ENCODE measurements at regions of chr2 and their contacts with region 1.

Region 1: GRCh38 chr2:71018625-71019024 is 24.0 kb upstream of the TEX261 start:
- DNase-seq: no peak
- H3K4me3 Mint-ChIP-seq: no peak overlapping the region
- H3K27ac Mint-ChIP-seq: no peak overlapping the region
- H3K4me1 Mint-ChIP-seq: peaks cover 8% of the 10 kb centered on the region
- H3K27me3 Mint-ChIP-seq: no peaks in the 10 kb centered on the region

Region 2: GRCh38 chr2:70975091-70975636 is 43.5 kb before region 1 on chr2:
- CTCF ChIA-PET with region 1: no interaction called
- intact Hi-C with region 1: no loop called
- DNase-seq: no peak
- H3K4me3 Mint-ChIP-seq: no peak overlapping the region
- H3K27ac Mint-ChIP-seq: no peak overlapping the region
- H3K4me1 Mint-ChIP-seq: peaks cover 13% of the 10 kb centered on the region
- H3K27me3 Mint-ChIP-seq: no peaks in the 10 kb centered on the region

Region 3: DNA sequence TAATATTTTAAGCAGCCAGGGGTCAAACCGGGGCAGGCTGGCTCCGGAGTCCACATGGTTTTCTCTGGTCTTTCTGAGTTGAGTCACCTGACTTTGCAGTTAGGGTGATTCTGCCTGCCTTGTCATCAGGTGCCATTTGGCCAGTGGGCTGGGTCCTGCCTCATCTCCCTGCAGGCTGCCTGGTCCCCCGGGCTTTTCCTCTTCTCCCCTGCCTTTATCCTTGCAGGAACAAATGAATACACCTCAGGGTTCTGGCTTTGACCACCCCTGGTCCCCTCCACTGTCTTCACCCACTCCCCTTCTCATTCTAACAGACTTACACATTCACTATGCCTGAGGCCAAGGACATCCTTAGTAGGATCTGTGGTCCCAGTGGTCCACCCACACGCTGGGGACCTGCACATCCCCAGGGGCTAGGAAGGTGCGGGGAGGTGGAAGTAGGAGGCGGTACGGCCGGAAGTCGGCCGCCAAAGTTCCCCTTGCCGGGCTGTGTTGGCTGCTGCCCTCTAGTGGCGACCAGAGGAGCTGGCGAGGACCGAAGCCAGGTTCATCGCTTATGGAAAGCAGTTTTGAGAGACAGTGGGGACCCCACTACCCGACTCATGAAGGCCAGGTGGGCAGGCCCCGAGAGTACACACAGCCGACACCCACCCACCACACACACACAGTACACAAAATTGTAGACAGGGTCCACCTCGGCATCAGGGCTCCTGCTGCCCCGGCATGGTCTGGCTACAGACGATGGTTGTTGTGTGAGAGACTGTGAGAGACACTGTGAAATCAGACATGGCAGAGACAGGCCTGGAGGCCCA is 17.6 kb before region 1 on chr2:
- CTCF ChIA-PET with region 1: interaction called, 11 read pairs
- intact Hi-C with region 1: no loop called
- DNase-seq: peak; percentile 91
- H3K4me3 Mint-ChIP-seq: peak overlapping the region; percentile 73
- H3K27ac Mint-ChIP-seq: peak overlapping the region; percentile 63
- H3K4me1 Mint-ChIP-seq: peaks cover 16% of the 10 kb centered on the region
- H3K27me3 Mint-ChIP-seq: no peaks in the 10 kb centered on the region

Region 4: DNA sequence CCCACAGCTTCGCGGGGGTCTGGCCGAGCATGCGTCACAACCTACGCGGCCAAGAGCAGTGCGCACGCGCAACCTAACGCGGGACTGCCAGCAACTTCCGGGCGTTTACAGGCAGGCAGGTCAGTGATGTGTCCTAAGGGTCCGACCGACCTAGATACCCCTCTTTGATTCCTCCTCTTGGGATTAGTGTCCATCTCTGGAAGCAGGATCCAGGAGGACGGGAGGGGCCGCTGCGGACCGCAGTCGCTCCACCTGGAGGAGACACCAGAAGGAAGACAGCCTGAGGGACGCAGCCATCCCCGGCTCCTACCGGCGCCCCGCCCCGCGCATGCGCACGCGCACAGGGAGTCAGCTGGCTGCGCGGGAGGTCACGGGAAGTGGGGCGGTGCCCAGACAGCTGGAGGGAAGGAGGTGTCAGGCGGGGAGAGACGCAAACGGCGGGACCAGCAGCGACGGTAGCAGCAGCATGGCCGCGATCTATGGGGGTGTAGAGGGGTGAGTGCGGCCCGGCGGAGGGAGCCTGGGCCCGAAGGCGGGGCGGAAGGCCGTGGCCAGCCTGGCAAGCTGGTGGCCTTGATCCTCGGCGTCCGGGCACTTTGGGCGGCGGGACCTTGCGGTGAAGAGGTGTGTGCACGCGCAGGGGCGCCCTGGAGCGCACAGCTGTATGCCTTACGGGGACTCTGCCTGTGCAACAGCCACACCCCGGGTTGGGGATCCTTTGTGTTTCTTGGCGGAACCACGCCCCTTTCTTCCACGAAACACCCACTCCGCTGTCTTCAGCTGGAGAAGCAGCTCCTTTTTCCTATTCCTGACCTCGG is 49.8 kb after region 1 on chr2 and contains the start of gene NAGK:
- CTCF ChIA-PET with region 1: no interaction called
- intact Hi-C with region 1: loop called (anchors 2 kb)
- DNase-seq: peak; percentile 96
- H3K4me3 Mint-ChIP-seq: peak within 1 kb of the TSS; percentile 95
- H3K27ac Mint-ChIP-seq: peak within 1 kb of the TSS; percentile 98
- H3K4me1 Mint-ChIP-seq: peaks cover 49% of the 10 kb centered on the region
- H3K27me3 Mint-ChIP-seq: no peaks in the 10 kb centered on the region
- total RNA-seq, gene NAGK: 33.2 to 38.3 TPM

Region 5: GRCh38 chr2:71130113-71130904 is 111.7 kb after region 1 on chr2 and contains the starts of genes MCEE and MPHOSPH10:
- CTCF ChIA-PET with region 1: no interaction called
- intact Hi-C with region 1: loop called (anchors 1 kb)
- DNase-seq: peak; percentile 94
- H3K4me3 Mint-ChIP-seq: no peak within 1 kb of the TSS
- H3K27ac Mint-ChIP-seq: no peak within 1 kb of the TSS
- H3K4me1 Mint-ChIP-seq: peaks cover 16% of the 10 kb centered on the region
- H3K27me3 Mint-ChIP-seq: no peaks in the 10 kb centered on the region
- total RNA-seq, gene MCEE: 14.0 to 15.8 TPM
- total RNA-seq, gene MPHOSPH10: 27.0 to 32.3 TPM

Region 6: GRCh38 chr2:71173096-71173495 is 154.5 kb after region 1 on chr2:
- CTCF ChIA-PET with region 1: no interaction called
- intact Hi-C with region 1: no loop called
- DNase-seq: no peak
- H3K4me3 Mint-ChIP-seq: no peak overlapping the region
- H3K27ac Mint-ChIP-seq: no peak overlapping the region
- H3K4me1 Mint-ChIP-seq: peaks cover 6% of the 10 kb centered on the region
- H3K27me3 Mint-ChIP-seq: no peaks in the 10 kb centered on the region

Region 7: DNA sequence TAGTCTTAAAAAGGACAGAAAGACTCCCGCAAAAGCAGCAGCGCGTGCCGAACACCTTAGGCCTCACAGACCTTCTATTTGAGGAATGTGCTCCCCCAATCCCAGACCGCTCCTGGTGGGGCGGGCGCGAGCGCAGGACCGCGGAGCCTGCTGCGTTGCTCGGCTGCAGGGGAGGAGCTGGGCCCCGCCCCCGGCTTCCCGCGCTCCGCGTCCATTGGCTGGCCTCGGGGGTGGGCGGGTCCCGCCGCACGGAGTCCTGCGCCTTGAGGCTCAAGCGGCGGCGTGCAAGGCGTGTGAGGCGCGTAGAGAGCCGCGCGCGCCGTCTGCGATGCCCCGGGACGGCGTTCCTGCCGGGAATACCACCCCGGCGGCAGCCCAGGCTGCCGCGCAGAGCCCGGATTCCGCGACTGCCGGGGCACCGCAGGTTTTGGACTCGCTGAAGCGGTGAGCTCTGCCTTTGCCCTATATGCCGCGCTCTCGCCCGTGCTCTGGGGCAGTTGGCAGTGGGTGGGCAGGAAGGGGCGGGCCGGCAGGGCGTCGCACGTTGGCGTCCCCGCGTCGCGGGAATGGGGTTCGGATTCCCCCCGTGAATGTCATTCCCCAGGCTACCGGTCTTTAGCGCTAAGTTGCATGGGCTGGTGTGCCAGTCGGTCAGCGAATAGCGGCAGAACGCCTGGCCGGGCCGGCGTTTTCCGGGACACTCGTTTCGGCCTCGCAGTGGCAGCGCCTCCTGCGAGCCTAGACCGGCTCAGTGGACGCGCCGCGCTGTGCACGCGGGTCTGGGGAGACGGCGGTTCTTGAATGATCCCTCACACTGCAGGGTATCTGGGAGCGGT is 257.9 kb after region 1 on chr2:
- CTCF ChIA-PET with region 1: no interaction called
- intact Hi-C with region 1: loop called (anchors 5 kb)
- DNase-seq: peak; percentile 87
- H3K4me3 Mint-ChIP-seq: peak overlapping the region; percentile 69
- H3K27ac Mint-ChIP-seq: no peak overlapping the region
- H3K4me1 Mint-ChIP-seq: peaks cover 8% of the 10 kb centered on the region
- H3K27me3 Mint-ChIP-seq: peaks cover 68% of the 10 kb centered on the region